ENCODE measurements at regions of chrX and their contacts with region 1.

Region 1: GRCh38 chrX:132022967-132023895 is at the start of gene STK26:
- DNase-seq: peak; percentile 64
- ATAC-seq: peak; percentile 84
- H3K4me3 Mint-ChIP-seq: peak within 1 kb of the TSS; percentile 90
- H3K27ac Mint-ChIP-seq: peak within 1 kb of the TSS; percentile 84
- H3K4me1 Mint-ChIP-seq: peaks cover 31% of the 10 kb centered on the region
- H3K27me3 Mint-ChIP-seq: no peaks in the 10 kb centered on the region
- CTCF ChIP-seq: no peak
- total RNA-seq, gene STK26: 19.9 and 20.7 TPM in 2 replicates

Region 2: DNA sequence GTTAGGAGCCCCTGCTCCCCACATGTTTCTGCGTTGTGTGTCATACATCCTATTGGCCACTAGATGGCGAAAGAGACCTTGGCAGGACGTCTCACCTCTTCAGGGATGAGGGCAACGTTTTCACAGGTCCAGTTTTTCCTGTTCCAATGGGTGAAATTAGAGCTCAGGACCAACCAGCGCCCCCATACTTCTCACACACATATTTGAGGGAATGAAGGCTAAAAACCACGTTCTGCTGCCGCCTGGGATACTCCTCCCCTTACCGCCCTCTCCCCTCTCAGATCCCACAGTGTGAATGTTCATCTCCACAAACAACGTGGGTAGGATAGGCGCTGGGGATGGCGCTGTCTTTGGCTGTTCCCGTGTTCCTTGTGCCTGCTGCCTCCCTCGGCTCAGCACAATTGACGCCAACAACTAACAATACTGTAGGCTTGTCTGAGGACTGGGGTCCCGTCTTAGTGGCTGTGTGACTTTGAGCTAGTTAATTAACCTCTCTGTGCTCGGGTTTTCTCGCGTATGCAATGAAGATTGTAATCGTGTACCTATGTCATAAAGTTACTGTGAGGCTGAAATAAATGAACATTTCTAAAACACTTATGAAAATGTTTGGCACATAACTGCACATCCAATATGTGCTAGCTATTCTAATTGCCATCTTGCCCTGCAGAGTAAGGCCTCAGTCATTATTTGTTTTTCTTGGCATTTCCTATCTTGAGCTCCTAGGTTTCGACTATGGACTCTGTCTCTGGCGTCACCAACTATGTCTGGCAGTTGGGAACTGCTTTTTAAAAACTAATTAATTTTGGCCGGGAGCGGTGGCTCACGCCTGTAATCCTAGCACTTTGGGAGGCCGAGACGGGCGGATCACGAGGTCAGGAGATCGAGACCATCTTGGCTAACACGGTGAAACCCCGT is 181.5 kb before region 1 on chrX:
- CTCF ChIA-PET with region 1: no interaction called
- POLR2A ChIA-PET with region 1: no interaction called
- intact Hi-C with region 1: loop called (anchors 5 kb)
- DNase-seq: no peak
- ATAC-seq: peak; percentile 70
- H3K4me3 Mint-ChIP-seq: no peak overlapping the region
- H3K27ac Mint-ChIP-seq: no peak overlapping the region
- H3K4me1 Mint-ChIP-seq: peaks cover 3% of the 10 kb centered on the region
- H3K27me3 Mint-ChIP-seq: no peaks in the 10 kb centered on the region
- CTCF ChIP-seq: no peak

Region 3: DNA sequence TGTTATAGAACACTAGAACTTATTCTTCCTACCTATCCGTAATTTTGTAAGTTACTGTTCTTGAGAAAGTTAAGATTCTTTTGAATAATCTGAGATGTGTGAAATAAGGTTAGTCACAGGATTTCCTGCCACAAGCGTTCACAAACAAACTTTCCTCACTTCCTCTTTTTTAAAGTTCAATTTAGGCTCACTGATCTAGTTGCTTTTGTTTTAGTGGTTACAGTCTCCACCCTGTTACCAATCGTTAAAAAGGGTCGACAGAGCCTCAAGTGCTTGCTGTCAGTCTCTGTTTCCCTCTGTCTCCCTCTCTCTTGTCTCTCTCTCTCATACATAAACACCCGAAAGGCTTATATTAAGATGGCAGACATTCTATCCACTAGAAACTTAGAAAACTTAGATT is 36.0 kb before region 1 on chrX:
- CTCF ChIA-PET with region 1: no interaction called
- POLR2A ChIA-PET with region 1: interaction called, 10 read pairs
- intact Hi-C with region 1: loop called (anchors 1 kb)
- DNase-seq: no peak
- ATAC-seq: peak; percentile 92
- H3K4me3 Mint-ChIP-seq: peak overlapping the region; percentile 64
- H3K27ac Mint-ChIP-seq: peak overlapping the region; percentile 97
- H3K4me1 Mint-ChIP-seq: peaks cover 43% of the 10 kb centered on the region
- H3K27me3 Mint-ChIP-seq: no peaks in the 10 kb centered on the region
- CTCF ChIP-seq: no peak

Region 4: GRCh38 chrX:132034648-132035047 is 11.4 kb after region 1 on chrX:
- CTCF ChIA-PET with region 1: interaction called, 3 read pairs
- POLR2A ChIA-PET with region 1: interaction called, 5 read pairs
- intact Hi-C with region 1: loop called (anchors 1 kb)
- DNase-seq: no peak
- ATAC-seq: no peak
- H3K4me3 Mint-ChIP-seq: peak overlapping the region; percentile 13
- H3K27ac Mint-ChIP-seq: peak overlapping the region; percentile 21
- H3K4me1 Mint-ChIP-seq: peaks cover 57% of the 10 kb centered on the region
- H3K27me3 Mint-ChIP-seq: no peaks in the 10 kb centered on the region
- CTCF ChIP-seq: no peak

Region 5: DNA sequence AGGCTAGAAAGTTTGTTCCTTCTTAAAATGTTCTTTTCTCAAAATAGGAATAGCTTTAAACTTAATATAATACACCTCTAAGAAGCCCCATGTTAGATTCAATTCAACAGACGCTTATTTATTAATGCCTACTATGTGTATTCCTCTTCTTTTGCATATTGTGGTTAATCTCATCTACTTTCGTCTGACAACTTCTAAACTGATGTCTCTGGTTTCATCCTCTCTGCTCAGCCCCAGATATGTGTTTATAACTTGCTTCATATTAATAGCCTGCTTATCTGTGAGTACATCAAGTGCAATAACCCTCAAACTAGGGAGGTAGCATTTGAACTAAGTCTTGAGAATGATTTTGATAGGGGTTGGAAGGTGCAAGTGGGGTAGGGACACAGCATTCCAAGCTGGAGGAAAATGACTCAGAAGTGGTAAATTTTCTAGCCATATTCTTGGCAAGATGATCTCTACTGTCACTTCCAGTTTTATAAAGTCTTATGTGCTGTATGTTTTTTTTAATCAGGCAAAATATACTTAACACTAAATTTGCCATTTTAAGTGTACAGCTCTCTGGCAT is 36.8 kb after region 1 on chrX:
- CTCF ChIA-PET with region 1: no interaction called
- POLR2A ChIA-PET with region 1: interaction called, 3 read pairs
- intact Hi-C with region 1: loop called (anchors 2 kb)
- DNase-seq: no peak
- ATAC-seq: no peak
- H3K4me3 Mint-ChIP-seq: no peak overlapping the region
- H3K27ac Mint-ChIP-seq: no peak overlapping the region
- H3K4me1 Mint-ChIP-seq: peaks cover 18% of the 10 kb centered on the region
- H3K27me3 Mint-ChIP-seq: no peaks in the 10 kb centered on the region
- CTCF ChIP-seq: no peak

Region 6: DNA sequence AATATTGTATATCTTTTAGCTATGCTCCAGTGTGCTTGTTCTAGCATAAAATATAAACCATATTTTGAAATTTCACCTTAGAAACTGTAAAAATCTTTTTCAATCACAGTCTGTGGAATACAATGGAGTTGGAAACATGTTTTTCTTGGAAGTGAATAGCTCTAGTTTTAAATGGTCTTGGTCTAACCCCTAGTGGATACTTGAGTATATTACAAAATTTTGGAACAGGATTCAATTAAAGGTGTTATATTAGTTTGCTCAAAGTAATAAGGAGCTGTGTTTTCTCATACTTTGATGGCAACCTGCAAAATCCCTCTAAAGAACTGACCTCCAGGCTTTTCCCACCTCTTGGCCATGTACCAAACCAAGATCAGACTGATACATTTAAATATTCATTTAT is 48.0 kb after region 1 on chrX:
- CTCF ChIA-PET with region 1: no interaction called
- POLR2A ChIA-PET with region 1: interaction called, 3 read pairs
- intact Hi-C with region 1: loop called (anchors 2 kb)
- DNase-seq: no peak
- ATAC-seq: no peak
- H3K4me3 Mint-ChIP-seq: no peak overlapping the region
- H3K27ac Mint-ChIP-seq: no peak overlapping the region
- H3K4me1 Mint-ChIP-seq: no peaks in the 10 kb centered on the region
- H3K27me3 Mint-ChIP-seq: no peaks in the 10 kb centered on the region
- CTCF ChIP-seq: no peak

Region 7: DNA sequence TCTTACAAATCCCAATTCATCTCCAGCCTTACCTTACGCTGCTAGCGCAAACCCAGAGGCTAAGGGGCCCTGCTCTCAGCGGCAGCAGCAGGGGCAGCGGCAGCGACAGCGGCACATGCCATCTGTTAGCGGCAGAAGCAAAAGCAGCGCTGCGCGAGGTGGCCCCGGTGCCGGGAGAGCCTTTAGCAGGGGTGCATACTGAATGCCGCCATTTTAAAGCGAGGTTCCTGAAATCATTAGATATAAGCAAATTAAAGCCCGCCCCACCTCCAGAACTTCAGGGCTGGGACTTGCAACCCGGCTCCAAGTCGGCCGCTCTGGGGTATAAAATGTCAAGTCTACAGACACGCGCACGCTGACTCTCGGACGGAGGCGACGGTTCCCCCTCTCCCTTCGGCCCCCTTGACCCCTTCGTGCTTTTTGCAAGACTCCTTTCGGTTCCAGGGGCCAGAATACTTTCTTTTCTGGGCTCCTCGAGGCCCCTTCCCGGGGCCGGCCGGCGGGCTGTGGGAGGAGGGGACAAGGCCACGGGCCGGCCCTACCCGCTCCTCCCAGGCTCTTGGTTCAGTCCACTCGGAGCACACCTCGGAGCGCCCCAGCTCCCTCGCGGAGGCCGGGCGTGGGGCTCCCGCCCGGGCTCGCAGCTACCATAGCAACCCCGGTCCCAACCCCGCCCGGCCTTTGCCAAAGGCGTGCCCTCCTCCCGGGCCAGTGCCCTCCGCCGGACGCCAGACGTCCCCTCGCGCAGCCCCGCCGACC is 465.8 kb after region 1 on chrX and contains the start of gene MBNL3:
- CTCF ChIA-PET with region 1: no interaction called
- POLR2A ChIA-PET with region 1: no interaction called
- intact Hi-C with region 1: loop called (anchors 5 kb)
- DNase-seq: peak; percentile 61
- ATAC-seq: peak; percentile 63
- H3K4me3 Mint-ChIP-seq: peak within 1 kb of the TSS; percentile 98
- H3K27ac Mint-ChIP-seq: peak within 1 kb of the TSS; percentile 99
- H3K4me1 Mint-ChIP-seq: peaks cover 60% of the 10 kb centered on the region
- H3K27me3 Mint-ChIP-seq: no peaks in the 10 kb centered on the region
- CTCF ChIP-seq: no peak
- total RNA-seq, gene MBNL3: 41.0 and 47.0 TPM in 2 replicates